GM18951 (cell line): ENCODE measurements at regions of chr1 and their contacts with region 1.

Region 1: GRCh38 chr1:92623187-92623778 is 136.6 kb upstream of the GFI1 start:
- POLR2A ChIP-seq: no peak

Region 2: GRCh38 chr1:91997607-91998195 is 625.6 kb before region 1 on chr1:
- in situ Hi-C with region 1: loop called (anchors 25 kb)
- POLR2A ChIP-seq: no peak

Region 3: GRCh38 chr1:92317836-92318493 is 305.3 kb before region 1 on chr1:
- in situ Hi-C with region 1: loop called (anchors 5 kb)
- POLR2A ChIP-seq: no peak

Region 4: GRCh38 chr1:92778376-92778775 is 155.1 kb after region 1 on chr1:
- in situ Hi-C with region 1: no loop called
- POLR2A ChIP-seq: no peak

Region 5: DNA sequence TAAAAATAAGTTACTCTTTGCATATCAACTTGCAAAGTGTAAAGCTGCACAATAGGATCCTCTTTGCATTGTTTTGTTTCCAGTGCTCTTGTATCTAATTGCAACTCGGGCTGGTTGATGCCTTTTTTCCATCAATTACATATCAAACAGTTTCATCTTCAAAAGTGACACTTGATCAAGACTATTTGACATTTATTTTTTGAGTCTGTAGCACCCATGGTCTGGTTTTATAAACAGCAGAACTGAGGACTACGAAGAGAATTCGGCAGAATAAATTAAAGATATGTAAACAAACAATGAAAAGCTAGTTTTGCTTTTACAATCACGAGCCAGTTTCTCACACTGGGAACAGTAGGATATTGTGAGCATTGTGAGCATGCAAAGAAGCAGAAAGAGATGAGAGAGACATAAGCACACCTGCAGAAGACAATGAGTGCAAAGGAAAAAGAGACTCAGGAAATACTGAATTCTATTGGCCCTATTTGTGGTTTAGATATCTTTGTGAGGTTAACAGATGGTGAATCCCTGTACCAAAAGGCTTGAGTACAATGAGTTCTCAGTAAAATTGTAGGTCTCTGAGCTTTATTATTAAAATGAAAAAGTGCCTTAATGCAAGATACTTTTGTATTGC is 253.9 kb after region 1 on chr1:
- in situ Hi-C with region 1: no loop called
- POLR2A ChIP-seq: no peak